SK-N-SH (cell line): ENCODE measurements at regions of chr7 and their contacts with region 1.

Region 1: DNA sequence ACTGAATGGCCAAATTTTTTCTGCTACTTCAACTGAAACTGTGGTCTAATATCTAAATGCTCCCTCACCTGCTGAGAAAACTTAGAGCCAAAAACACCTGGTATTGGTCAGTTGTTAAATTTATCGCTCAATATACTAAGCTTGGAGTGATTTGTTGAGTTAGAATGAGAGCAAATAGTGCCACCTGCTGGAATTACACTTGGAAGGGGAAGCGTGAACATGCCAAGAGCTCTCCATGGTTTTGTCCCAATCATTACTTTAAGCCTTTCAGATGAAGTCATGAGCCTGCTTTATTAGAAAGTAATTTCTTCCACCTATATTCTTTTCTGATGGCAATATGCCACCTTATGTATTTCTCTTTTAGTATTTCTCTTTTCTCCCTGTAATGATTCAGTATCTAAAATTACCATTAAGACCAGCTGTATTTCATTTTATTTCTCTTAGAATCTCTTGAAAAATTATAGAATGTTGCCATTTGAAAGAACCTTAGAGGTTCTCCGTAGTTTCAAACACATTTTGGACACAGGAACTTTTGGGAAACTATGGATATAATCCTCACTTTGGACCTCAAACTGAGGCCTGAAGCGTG is 447.8 kb upstream of the C7orf33 start:
- DNase-seq: peak; percentile 62
- H3K4me3 ChIP-seq: no peak overlapping the region
- H3K27ac ChIP-seq: no peak overlapping the region
- H3K4me1 ChIP-seq: peaks cover 0 to 16% of the 10 kb centered on the region in 2 experiments; a peak in 1 of 4 replicates
- H3K27me3 ChIP-seq: no peaks in the 10 kb centered on the region
- CTCF ChIP-seq: peak; percentile 95
- EP300 ChIP-seq: peak in 1 of 2 experiments; percentile 17; a peak in 1 of 4 replicates
- RAD21 ChIP-seq: peak; percentile 95

Region 2: DNA sequence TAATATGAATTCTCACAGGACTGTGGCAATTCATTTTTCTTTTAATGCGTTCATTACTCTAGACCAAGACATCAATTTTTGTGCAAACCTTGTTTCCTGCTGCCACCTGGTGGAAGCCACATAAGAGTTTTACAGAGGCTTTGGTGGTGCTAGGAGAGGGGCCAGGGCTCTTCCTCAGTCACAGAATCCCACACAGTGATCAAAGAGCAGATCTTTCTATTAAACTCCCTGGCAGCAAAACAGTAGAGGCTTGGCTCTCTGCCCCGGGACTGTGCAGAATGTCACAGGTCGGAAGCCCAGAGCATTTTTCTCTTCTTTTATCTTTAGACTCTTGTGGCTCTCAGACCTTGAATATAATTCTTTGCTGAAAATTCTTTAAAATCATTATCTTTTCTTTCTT is 58.6 kb before region 1 on chr7:
- CTCF ChIA-PET with region 1: interaction called, 16 read pairs
- POLR2A ChIA-PET with region 1: no interaction called
- DNase-seq: peak; percentile 77
- H3K4me3 ChIP-seq: no peak overlapping the region
- H3K27ac ChIP-seq: peak overlapping the region; percentile 48 to 58; a peak in 3 of 4 replicates
- H3K4me1 ChIP-seq: peaks cover 9 to 14% of the 10 kb centered on the region in 2 experiments; a peak in 3 of 4 replicates
- H3K27me3 ChIP-seq: no peaks in the 10 kb centered on the region
- CTCF ChIP-seq: peak; percentile 98
- EP300 ChIP-seq: peak in 1 of 2 experiments; percentile 87; a peak in 2 of 4 replicates
- RAD21 ChIP-seq: peak; percentile 100

Region 3: GRCh38 chr7:148110111-148110868 is 32.5 kb before region 1 on chr7:
- CTCF ChIA-PET with region 1: interaction called, 20 read pairs
- POLR2A ChIA-PET with region 1: no interaction called
- DNase-seq: no peak
- H3K4me3 ChIP-seq: no peak overlapping the region
- H3K27ac ChIP-seq: no peak overlapping the region
- H3K4me1 ChIP-seq: peaks cover 0 to 5% of the 10 kb centered on the region in 2 experiments; a peak in 2 of 4 replicates
- H3K27me3 ChIP-seq: no peaks in the 10 kb centered on the region
- CTCF ChIP-seq: peak; percentile 21
- EP300 ChIP-seq: no peak
- RAD21 ChIP-seq: no peak

Region 4: DNA sequence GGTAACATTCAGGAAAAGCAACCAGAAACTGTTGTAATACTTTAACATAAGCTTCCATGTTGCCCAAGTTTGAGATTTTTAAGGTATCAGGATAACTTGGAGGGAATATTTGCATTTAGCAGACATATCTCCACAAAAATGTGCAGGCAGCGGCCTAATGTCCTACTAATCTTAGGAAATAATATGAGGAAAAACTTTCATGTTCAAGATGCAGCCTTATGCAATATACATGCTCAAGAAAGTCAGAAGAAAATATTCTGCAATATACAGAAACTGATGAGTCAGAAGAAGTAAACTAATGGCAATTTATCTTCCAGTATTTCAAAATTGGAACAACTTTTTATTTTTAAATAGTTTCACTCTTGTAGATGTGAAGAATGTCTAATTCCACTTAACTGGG is 15.4 kb before region 1 on chr7:
- CTCF ChIA-PET with region 1: interaction called, 38 read pairs
- POLR2A ChIA-PET with region 1: no interaction called
- DNase-seq: no peak
- H3K4me3 ChIP-seq: no peak overlapping the region
- H3K27ac ChIP-seq: no peak overlapping the region
- H3K4me1 ChIP-seq: no peaks in the 10 kb centered on the region
- H3K27me3 ChIP-seq: no peaks in the 10 kb centered on the region
- CTCF ChIP-seq: no peak
- EP300 ChIP-seq: no peak
- RAD21 ChIP-seq: no peak

Region 5: GRCh38 chr7:148163246-148163645 is 20.5 kb after region 1 on chr7:
- CTCF ChIA-PET with region 1: interaction called, 16 read pairs
- POLR2A ChIA-PET with region 1: no interaction called
- DNase-seq: no peak
- H3K4me3 ChIP-seq: no peak overlapping the region
- H3K27ac ChIP-seq: no peak overlapping the region
- H3K4me1 ChIP-seq: no peaks in the 10 kb centered on the region
- H3K27me3 ChIP-seq: no peaks in the 10 kb centered on the region
- CTCF ChIP-seq: no peak
- EP300 ChIP-seq: no peak
- RAD21 ChIP-seq: no peak

Region 6: DNA sequence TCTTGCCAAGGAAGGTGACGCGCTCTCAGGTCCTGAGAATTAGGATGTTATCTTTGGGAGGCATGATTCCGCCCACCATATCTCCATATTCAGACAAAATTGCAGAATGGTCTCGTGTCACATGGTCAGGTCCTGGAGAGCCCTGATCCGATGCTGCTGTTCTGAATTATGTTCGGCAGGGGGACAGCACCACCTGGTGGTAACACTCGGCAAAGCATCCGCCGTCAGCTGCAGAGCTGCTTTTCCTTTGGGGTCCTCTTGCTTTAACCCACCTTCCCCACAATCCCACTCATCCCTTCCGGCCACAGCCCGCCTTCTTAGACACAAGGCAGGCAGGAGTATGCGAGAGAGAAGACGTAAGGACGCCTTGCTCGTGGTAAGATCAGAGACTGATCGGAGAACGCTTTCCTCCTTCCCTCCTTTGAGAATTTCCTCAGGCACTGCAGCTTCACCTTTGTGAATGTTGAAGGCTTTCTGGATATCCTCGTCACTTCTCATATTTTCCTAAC is 120.0 kb after region 1 on chr7:
- CTCF ChIA-PET with region 1: interaction called, 26 read pairs
- POLR2A ChIA-PET with region 1: no interaction called
- DNase-seq: peak; percentile 84
- H3K4me3 ChIP-seq: peak overlapping the region; percentile 29 to 51
- H3K27ac ChIP-seq: no peak overlapping the region; a peak in 1 of 4 replicates
- H3K4me1 ChIP-seq: peaks cover 0 to 15% of the 10 kb centered on the region in 2 experiments; a peak in 2 of 4 replicates
- H3K27me3 ChIP-seq: no peaks in the 10 kb centered on the region
- CTCF ChIP-seq: peak; percentile 99
- EP300 ChIP-seq: no peak
- RAD21 ChIP-seq: peak; percentile 97